ENCODE measurements at regions of chr12 and their contacts with region 1.

Region 1: GRCh38 chr12:108803428-108804105 is 53.8 kb downstream of the SSH1 start:
- DNase-seq: peak; percentile 85

Region 2: GRCh38 chr12:108562348-108563135 is 241.0 kb before region 1 on chr12 and contains the start of gene ISCU:
- intact Hi-C with region 1: loop called in 1 of 2 experiments (anchors 5 kb)
- DNase-seq: peak; percentile 100
- total RNA-seq, gene ISCU: 113 to 119 TPM

Region 3: GRCh38 chr12:108597559-108598471 is 205.8 kb before region 1 on chr12 and contains the start of gene TMEM119:
- intact Hi-C with region 1: no loop called
- DNase-seq: no peak
- total RNA-seq, gene TMEM119: 12.7 to 72.5 TPM

Region 4: GRCh38 chr12:108664338-108665258 is 139.0 kb before region 1 on chr12:
- intact Hi-C with region 1: loop called (anchors 1 to 5 kb)
- DNase-seq: peak; percentile 89

Region 5: DNA sequence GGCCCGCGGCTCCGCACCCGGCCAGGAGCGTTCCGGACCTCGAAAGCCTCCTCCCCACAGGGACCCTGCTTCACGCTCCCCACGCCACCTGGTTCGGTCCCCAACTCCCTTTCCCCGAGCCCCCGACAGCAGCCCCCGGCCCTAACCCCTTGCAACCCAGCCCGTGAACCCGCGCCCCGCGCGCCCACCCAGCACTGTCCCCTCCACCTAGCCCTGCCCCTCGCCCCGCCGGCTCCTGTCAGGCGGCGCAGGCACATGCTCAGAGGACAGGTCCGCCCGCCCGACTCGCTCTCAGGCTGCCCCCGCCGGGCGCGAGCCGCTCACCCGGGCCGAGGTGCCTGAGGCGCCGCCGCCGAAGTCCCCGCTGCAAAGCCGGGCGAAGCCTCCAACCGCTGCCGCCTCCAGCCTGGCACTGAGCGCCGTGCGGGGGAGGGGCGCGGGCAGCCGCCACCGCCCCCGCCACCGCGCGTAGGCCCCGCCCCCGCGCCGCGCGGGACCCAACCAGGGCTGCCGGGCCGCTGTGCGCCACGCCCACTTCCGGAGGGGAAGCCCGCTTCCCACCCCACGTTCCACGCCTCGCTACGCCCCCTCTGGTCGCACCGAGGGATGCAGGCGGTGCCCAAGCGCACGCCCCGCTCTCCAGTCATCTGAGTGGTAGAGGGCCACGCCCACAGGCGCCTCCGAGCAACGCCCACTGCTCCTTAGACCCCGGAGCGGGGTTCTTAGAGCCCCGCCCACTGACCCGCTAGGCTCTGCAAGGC is 72.3 kb before region 1 on chr12 and contains the start of gene CORO1C:
- intact Hi-C with region 1: loop called in 1 of 2 experiments (anchors 5 kb)
- DNase-seq: peak; percentile 99
- total RNA-seq, gene CORO1C: 361 to 548 TPM

Region 6: DNA sequence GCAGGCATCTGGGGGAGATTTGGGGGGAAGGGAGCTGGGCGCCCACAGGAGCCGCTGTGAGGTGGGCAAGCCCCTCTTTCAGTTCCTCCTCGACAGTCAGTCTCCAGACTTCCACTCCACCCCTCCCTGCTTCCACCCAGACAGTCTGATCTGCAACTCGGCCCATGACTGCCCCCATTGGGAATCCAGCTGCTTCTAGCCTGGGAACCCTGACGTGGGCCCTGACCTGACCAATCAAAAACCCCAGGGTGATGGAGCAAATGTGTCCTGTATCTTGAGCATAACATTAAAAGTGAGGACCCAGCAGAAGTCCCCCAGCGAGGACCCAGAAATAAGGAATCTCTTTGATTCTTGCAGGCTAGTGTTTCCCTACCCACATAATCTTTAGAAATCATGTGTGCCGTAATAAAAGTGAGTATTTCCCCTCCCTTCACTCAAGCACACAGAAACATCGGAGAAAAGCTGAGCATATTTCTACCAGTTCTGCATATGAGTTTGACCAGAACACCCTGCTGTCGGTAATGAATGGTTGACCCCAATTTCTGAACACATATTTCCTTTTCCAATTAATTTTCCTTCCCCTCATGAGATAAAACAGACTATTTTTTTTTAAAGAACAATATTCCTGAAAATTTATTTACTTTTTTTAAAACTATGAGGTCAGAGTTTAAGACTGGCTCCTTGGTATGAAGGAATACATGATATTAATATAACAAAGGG is 47.4 kb after region 1 on chr12:
- intact Hi-C with region 1: loop called in 1 of 2 experiments (anchors 5 kb)
- DNase-seq: peak; percentile 91

Region 7: GRCh38 chr12:108950991-108951739 is 147.6 kb after region 1 on chr12:
- intact Hi-C with region 1: loop called in 1 of 2 experiments (anchors 5 kb)
- DNase-seq: peak; percentile 87

Region 8: DNA sequence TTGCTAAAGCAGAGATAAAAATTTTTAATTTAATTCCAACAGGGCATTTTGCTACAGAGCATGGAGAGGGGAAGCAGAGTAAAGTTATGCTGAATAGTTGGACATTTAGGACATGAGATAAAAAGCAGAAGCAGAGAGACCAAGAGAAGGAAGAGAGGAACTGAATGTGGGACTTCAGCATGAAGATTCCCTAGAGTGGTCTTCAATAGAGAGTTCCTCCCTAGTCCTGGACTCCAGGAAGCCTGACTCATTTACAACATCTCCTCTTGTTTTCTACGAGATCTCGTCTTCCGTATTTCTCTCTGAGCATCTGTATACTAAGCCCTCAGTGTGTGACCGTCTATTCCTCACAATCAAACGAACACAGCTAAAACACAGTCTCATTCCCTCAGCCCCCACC is 1285.4 kb after region 1 on chr12:
- intact Hi-C with region 1: no loop called
- DNase-seq: no peak